Activated naive CD4-positive, alpha-beta T cell treated with anti-CD3 and anti-CD28 coated beads for 36 hours (primary cell): ENCODE measurements at regions of chr20 and their contacts with region 1.

Region 1: DNA sequence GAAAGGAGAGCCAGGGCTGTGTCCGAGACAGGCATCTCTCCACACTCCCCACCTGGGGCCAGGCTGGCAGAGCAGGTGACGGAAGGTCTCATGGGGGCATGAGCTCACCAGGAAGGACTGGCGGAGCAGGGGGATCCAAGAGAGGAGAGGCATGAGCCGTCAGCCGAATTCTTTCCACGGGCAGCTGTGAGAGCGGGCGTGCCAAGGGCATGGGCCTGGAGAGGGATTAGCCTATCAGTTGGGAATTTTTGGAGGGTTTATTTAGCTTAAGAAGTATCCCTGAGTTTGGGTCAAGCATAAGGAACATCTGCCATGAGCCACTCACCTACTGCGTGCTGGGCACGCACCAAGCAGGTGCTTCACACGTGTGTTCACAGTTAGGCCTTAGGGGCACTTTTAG is 60.2 kb upstream of the ZNFX1 start:
- DNase-seq: no peak
- H3K4me3 Mint-ChIP-seq: no peak overlapping the region
- H3K27ac Mint-ChIP-seq: no peak overlapping the region
- H3K4me1 Mint-ChIP-seq: no peaks in the 10 kb centered on the region
- H3K27me3 Mint-ChIP-seq: peaks cover 5% of the 10 kb centered on the region

Region 2: DNA sequence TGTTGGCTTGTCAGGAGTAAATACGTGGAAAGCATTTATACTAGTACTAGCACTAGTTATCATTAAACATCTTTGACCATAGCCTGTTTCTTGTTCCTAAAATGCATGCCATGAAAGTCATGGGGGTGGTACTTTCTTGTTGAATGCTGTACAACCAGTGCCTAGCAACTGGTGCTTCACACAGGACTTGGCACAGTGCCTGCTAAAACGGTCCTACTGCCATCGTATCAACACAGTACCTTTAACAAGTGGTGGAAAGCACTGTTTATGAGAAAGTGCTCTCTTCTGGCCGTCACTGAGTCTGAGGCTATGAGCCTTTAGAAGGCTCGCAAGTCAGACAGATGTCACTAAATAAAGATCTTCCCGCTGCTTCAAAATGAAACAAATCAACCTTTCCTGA is 81.8 kb before region 1 on chr20:
- CTCF ChIA-PET with region 1: no interaction called
- intact Hi-C with region 1: no loop called
- DNase-seq: no peak
- H3K4me3 Mint-ChIP-seq: no peak overlapping the region
- H3K27ac Mint-ChIP-seq: peak overlapping the region; percentile 64
- H3K4me1 Mint-ChIP-seq: peaks cover 17% of the 10 kb centered on the region
- H3K27me3 Mint-ChIP-seq: no peaks in the 10 kb centered on the region

Region 3: GRCh38 chr20:49323622-49324238 is 14.3 kb before region 1 on chr20:
- CTCF ChIA-PET with region 1: interaction called, 17 read pairs
- intact Hi-C with region 1: no loop called
- DNase-seq: peak; percentile 49
- H3K4me3 Mint-ChIP-seq: no peak overlapping the region
- H3K27ac Mint-ChIP-seq: no peak overlapping the region
- H3K4me1 Mint-ChIP-seq: peaks cover 18% of the 10 kb centered on the region
- H3K27me3 Mint-ChIP-seq: peaks cover 27% of the 10 kb centered on the region

Region 4: GRCh38 chr20:49484180-49485140 is 146.4 kb after region 1 on chr20:
- CTCF ChIA-PET with region 1: interaction called, 31 read pairs
- intact Hi-C with region 1: loop called (anchors 1 kb)
- DNase-seq: peak; percentile 77
- H3K4me3 Mint-ChIP-seq: peak overlapping the region; percentile 58
- H3K27ac Mint-ChIP-seq: no peak overlapping the region
- H3K4me1 Mint-ChIP-seq: peaks cover 4% of the 10 kb centered on the region
- H3K27me3 Mint-ChIP-seq: peaks cover 55% of the 10 kb centered on the region

Region 5: GRCh38 chr20:49508435-49509199 is 170.6 kb after region 1 on chr20:
- CTCF ChIA-PET with region 1: interaction called, 7 read pairs
- intact Hi-C with region 1: loop called (anchors 1 kb)
- DNase-seq: no peak
- H3K4me3 Mint-ChIP-seq: no peak overlapping the region
- H3K27ac Mint-ChIP-seq: no peak overlapping the region
- H3K4me1 Mint-ChIP-seq: no peaks in the 10 kb centered on the region
- H3K27me3 Mint-ChIP-seq: peaks cover 16% of the 10 kb centered on the region

Region 6: GRCh38 chr20:49534255-49534712 is 196.2 kb after region 1 on chr20:
- CTCF ChIA-PET with region 1: interaction called, 5 read pairs
- intact Hi-C with region 1: loop called (anchors 1 kb)
- DNase-seq: peak; percentile 77
- H3K4me3 Mint-ChIP-seq: no peak overlapping the region
- H3K27ac Mint-ChIP-seq: no peak overlapping the region
- H3K4me1 Mint-ChIP-seq: peaks cover 16% of the 10 kb centered on the region
- H3K27me3 Mint-ChIP-seq: peaks cover 13% of the 10 kb centered on the region